ENCODE measurements at regions of chr11 and their contacts with region 1.

Region 1: GRCh38 chr11:47599902-47600301 is 5.7 kb upstream of the C1QTNF4 start:
- H3K4me3 ChIP-seq: no peak overlapping the region
- H3K27ac ChIP-seq: no peak overlapping the region
- H3K4me1 ChIP-seq: no peaks in the 10 kb centered on the region
- CTCF ChIP-seq: no peak

Region 2: GRCh38 chr11:47616726-47617416 is 17.0 kb after region 1 on chr11:
- CTCF ChIA-PET with region 1: interaction called, 11 read pairs
- POLR2A ChIA-PET with region 1: no interaction called
- H3K4me3 ChIP-seq: no peak overlapping the region
- H3K27ac ChIP-seq: no peak overlapping the region
- H3K4me1 ChIP-seq: no peaks in the 10 kb centered on the region
- CTCF ChIP-seq: peak; percentile 62; the same call in 1 of the 2 replicates